GM13976 (cell line): ENCODE measurements at regions of chr9 and their contacts with region 1.

Region 1: GRCh38 chr9:31799953-31800609 is 584.4 kb upstream of the ACO1 start:
- DNase-seq: no peak
- CTCF ChIP-seq: peak; percentile 31

Region 2: GRCh38 chr9:31089549-31090221 is 710.4 kb before region 1 on chr9:
- in situ Hi-C with region 1: no loop called
- DNase-seq: no peak
- CTCF ChIP-seq: no peak

Region 3: GRCh38 chr9:31140316-31140715 is 659.8 kb before region 1 on chr9:
- in situ Hi-C with region 1: loop called (anchors 25 kb)
- DNase-seq: no peak
- CTCF ChIP-seq: peak; percentile 26

Region 4: DNA sequence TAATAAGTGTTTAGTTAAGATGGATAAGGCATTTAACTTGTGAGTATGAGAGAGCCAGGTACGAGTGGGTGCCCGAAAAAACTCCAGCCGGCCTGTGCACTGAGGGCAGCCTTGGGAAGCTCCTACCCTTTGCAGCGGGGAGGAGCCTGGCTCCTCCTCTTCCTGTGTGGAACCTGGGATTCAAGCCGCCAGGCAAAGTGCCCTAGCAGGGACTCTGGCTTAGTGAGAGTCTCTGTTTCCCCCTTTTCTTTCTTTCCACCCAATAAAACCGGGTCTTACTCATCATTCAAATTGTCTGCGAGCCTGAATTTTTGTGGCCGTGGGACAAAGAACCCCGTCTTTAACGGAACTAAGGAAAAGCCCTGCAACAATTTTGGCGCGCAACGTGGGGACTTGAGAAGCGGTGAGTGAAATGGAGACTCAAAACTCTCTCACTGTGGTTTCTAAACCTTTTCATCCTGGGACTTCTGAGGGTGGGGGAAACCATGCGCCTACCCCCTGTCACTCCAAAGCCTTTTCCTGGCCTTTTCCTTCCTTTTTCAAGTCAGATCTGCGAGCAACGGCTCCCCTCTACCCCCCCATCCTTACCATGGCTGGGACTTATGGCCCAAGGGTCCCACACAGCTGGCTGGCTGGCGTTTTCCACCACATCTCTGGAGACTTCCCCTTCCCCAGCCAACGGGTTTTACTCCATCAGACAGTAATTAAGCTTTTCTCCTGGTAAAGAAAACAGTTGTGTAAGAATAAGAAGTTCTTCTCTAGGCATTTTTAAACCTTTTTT is 48.6 kb after region 1 on chr9:
- in situ Hi-C with region 1: no loop called
- DNase-seq: no peak
- CTCF ChIP-seq: no peak